ENCODE measurements at regions of chr4 and their contacts with region 1.

Region 1: DNA sequence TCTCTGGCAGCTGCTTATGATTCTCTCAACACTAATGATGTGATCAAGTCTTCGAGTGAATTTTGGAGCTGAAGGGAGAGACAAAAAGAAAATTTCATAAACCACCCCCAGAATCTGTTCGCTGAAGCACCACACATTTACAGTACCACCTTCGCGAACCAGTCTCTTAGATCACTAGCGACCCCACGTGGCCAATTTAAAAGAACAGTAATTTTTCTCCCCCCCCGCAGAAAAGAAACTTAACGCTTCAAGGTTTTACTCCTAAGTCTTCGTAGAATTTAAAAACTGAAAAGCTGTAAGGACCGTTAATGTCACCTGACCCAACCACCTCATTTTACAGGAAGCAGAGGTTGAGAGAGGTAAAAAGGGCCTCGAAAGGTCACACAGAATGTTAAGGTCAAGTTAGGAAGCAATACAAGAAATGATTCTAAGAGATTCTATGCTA is 187.5 kb downstream of the QDPR start:
- DNase-seq: peak; percentile 82
- H3K4me3 ChIP-seq: no peak overlapping the region
- H3K27ac ChIP-seq: peak overlapping the region; percentile 53
- H3K4me1 ChIP-seq: peaks cover 21% of the 10 kb centered on the region
- H3K27me3 ChIP-seq: no peaks in the 10 kb centered on the region
- CTCF ChIP-seq: peak; percentile 83

Region 2: GRCh38 chr4:16450724-16451123 is 873.7 kb before region 1 on chr4:
- CTCF ChIA-PET with region 1: no interaction called
- POLR2A ChIA-PET with region 1: no interaction called
- intact Hi-C with region 1: loop called (anchors 5 kb)
- DNase-seq: peak; percentile 33
- H3K4me3 ChIP-seq: no peak overlapping the region
- H3K27ac ChIP-seq: no peak overlapping the region
- H3K4me1 ChIP-seq: no peaks in the 10 kb centered on the region
- H3K27me3 ChIP-seq: no peaks in the 10 kb centered on the region
- CTCF ChIP-seq: peak; percentile 54

Region 3: DNA sequence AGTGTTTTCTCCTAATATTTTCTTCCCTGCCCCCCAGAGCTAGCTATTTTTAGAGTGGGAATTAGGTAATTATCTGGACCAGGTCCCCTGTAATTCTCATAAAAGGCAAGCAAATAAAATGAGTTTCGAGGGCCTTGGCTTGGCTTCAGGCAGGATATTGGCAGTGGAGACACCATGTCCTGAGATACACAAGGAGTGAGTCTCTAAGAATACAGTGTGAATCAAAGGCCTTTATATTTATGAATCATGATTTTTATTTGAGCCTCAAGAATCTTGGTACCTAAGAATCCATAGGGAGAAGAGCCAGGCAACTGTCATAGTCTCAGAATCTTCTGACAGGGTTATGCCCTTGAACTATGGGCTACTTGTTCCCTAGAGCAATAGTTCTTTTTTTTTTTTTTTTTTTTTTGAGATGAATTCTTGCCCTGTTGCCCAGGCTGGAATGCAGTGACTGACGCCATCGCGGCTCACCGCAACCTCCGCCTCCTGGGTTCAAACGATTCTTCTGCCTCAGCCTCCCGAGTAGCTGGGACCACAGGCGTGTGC is 631.4 kb before region 1 on chr4:
- CTCF ChIA-PET with region 1: no interaction called
- POLR2A ChIA-PET with region 1: no interaction called
- intact Hi-C with region 1: loop called (anchors 5 kb)
- DNase-seq: no peak
- H3K4me3 ChIP-seq: no peak overlapping the region
- H3K27ac ChIP-seq: peak overlapping the region; percentile 78
- H3K4me1 ChIP-seq: peaks cover 53% of the 10 kb centered on the region
- H3K27me3 ChIP-seq: no peaks in the 10 kb centered on the region
- CTCF ChIP-seq: no peak

Region 4: GRCh38 chr4:16916719-16917337 is 407.6 kb before region 1 on chr4:
- CTCF ChIA-PET with region 1: interaction called, 4 read pairs
- POLR2A ChIA-PET with region 1: no interaction called
- intact Hi-C with region 1: loop called (anchors 2 kb)
- DNase-seq: peak; percentile 82
- H3K4me3 ChIP-seq: no peak overlapping the region
- H3K27ac ChIP-seq: no peak overlapping the region
- H3K4me1 ChIP-seq: no peaks in the 10 kb centered on the region
- H3K27me3 ChIP-seq: no peaks in the 10 kb centered on the region
- CTCF ChIP-seq: peak; percentile 97

Region 5: DNA sequence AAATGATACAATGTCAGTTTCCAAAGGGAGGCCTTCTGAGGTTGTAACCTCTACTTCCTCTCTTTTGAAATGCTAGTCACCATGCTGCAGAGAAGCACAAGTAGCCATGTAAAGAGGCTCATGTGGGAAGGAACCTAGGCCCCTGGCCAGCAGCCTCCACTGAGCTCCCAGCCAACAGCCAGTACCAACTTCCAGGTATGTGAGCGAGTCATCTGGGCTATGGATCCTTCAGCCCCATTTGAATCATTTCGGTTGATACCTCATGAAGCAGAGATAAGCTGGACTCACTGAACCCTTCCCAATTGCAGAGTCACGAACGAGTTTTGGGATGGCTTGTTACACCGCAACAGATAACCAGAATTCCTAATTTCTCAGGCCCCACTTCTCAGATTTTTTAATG is 239.0 kb before region 1 on chr4:
- CTCF ChIA-PET with region 1: no interaction called
- POLR2A ChIA-PET with region 1: no interaction called
- intact Hi-C with region 1: no loop called
- DNase-seq: no peak
- H3K4me3 ChIP-seq: no peak overlapping the region
- H3K27ac ChIP-seq: no peak overlapping the region
- H3K4me1 ChIP-seq: peaks cover 7% of the 10 kb centered on the region
- H3K27me3 ChIP-seq: no peaks in the 10 kb centered on the region
- CTCF ChIP-seq: no peak

Region 6: DNA sequence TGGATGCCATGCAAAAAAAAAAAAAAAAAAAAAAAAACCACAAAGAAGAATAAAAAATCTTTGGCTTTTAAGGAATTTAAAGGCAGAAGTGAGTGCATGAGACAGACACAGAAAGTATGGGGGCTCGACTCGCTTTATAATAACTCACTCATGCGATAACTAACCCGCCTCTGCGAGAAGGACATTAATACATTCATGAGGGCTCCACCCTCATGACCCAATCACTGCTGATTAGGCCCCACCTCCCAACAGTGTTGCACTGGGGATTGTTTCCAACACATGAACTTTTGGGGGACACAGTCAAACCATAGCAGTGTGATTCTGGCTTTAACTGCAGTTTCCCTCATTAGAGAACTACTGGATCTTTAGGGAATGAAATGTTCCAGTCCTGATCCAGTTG is 109.4 kb after region 1 on chr4:
- CTCF ChIA-PET with region 1: interaction called, 11 read pairs
- POLR2A ChIA-PET with region 1: no interaction called
- intact Hi-C with region 1: no loop called
- DNase-seq: no peak
- H3K4me3 ChIP-seq: no peak overlapping the region
- H3K27ac ChIP-seq: no peak overlapping the region
- H3K4me1 ChIP-seq: no peaks in the 10 kb centered on the region
- H3K27me3 ChIP-seq: no peaks in the 10 kb centered on the region
- CTCF ChIP-seq: no peak

Measured in A673 (cell line).